Ovary (tissue), 10 donors: ENCODE measurements at regions of chr4 and their contacts with region 1.

Region 1: GRCh38 chr4:7042697-7043464 is at the start of gene TADA2B:
- DNase-seq: peak; percentile 97 to 99 (median 97)
- H3K4me3 ChIP-seq: peak within 1 kb of the TSS; percentile 83
- H3K27ac ChIP-seq: peak within 1 kb of the TSS; percentile 26 to 74
- H3K4me1 ChIP-seq: peaks cover 29% of the 10 kb centered on the region
- H3K27me3 ChIP-seq: no peaks in the 10 kb centered on the region
- CTCF ChIP-seq: peak in 2 of 3 donors; percentile 58 to 89
- EP300 ChIP-seq: no peak
- POLR2A ChIP-seq: no peak
- total RNA-seq, gene TADA2B: 11.9 to 31.6 (median 26.9) TPM

Region 2: GRCh38 chr4:6855692-6856297 is 187.1 kb before region 1 on chr4:
- intact Hi-C with region 1: no loop called
- DNase-seq: no peak
- H3K4me3 ChIP-seq: no peak overlapping the region
- H3K27ac ChIP-seq: peak overlapping the region in 1 of 2 donors; percentile 17
- H3K4me1 ChIP-seq: peaks cover 14% of the 10 kb centered on the region
- H3K27me3 ChIP-seq: no peaks in the 10 kb centered on the region
- CTCF ChIP-seq: no peak
- EP300 ChIP-seq: no peak
- POLR2A ChIP-seq: no peak

Region 3: DNA sequence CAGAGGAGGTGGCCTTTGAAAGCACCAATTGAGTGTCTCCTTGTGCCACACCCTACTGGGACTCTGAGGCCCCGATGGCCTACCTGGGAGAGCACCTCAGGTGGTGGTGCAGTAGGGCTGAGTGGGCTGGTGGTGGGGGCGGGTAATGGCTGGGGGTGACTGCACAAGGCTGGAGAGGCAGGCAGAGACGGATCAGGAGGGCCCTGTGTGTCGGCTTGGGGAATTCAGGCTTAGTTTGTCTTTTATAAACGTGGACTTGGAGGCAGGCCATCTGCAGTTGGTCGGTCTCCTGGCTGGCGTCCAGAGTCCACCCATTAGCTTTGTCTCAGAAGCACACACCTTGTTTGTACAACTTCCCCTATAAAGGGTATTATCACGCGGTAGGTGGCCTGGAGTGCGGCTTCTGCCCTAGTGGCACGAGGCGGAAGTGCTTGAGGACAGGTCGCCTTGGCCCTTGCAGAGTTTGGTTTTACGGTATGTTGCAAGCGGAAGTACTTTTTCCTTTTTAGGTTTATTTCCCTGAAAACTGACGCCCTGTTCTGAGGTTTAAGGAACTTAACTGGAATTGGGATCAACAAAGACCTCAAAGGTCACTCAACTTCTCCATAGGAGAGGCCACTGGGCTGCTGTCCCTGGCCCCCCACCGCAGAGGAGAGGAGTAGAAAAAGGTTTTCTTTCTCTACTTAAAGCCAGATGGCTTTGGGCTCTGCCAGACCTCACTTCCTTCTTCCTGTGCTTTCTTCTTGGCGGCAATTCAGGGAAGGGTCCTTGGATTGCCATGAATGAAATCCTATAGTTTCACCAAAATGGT is 125.2 kb before region 1 on chr4:
- intact Hi-C with region 1: loop called in 1 of 4 experiments (anchors 10 kb)
- DNase-seq: peak; percentile 64 to 81 (median 70)
- H3K4me3 ChIP-seq: no peak overlapping the region
- H3K27ac ChIP-seq: peak overlapping the region; percentile 21 to 55
- H3K4me1 ChIP-seq: peaks cover 18% of the 10 kb centered on the region
- H3K27me3 ChIP-seq: no peaks in the 10 kb centered on the region
- CTCF ChIP-seq: peak in 2 of 3 donors; percentile 40 to 44
- EP300 ChIP-seq: peak; percentile 20
- POLR2A ChIP-seq: no peak

Region 4: DNA sequence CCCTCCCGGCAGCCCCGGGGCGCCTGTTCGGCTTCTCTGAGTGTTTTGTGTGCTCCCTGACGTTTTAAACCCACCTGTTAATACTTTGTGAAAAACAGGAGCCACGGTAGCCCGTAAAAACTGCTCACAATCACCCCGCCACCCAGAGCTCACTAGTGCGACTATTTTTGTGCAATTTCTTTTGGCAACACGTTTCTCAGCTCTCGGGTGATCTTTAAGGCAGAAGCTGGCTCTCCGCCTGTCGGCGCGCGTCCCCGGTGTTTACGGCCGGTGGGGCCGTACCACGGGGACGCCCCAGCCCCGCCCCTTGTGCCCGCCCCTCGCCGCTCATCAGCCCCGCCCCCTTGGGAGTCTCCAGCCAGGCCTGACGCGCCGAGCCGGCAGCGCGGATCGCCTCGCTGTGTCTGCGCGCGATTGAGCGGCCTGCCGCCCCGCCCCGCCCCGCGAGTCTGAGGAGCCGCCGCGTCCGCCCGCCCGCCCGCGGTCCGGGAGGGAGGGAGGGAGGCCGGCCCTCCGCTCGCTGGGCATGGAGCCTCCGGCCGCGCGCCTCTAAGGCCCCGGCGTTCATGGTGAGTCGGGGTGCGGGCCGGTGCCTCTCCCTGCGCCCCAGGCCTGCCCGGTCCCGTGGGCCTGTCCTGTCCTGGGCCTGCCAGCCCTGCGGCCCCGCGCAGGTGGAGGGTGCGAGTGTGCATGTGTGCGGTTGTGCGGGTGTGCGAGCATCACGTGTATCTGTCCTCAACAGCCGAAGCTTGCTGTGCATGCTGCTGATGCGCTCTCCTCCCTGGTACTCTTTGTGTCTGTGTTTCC is 55.9 kb before region 1 on chr4:
- intact Hi-C with region 1: loop called in 1 of 4 experiments (anchors 10 kb)
- DNase-seq: peak; percentile 95 to 97 (median 96)
- H3K4me3 ChIP-seq: peak overlapping the region; percentile 80
- H3K27ac ChIP-seq: peak overlapping the region; percentile 77 to 92
- H3K4me1 ChIP-seq: peaks cover 7% of the 10 kb centered on the region
- H3K27me3 ChIP-seq: no peaks in the 10 kb centered on the region
- CTCF ChIP-seq: peak in 1 of 3 donors; percentile 10
- EP300 ChIP-seq: no peak
- POLR2A ChIP-seq: peak; percentile 83

Region 5: GRCh38 chr4:7067452-7068278 is 24.8 kb after region 1 on chr4 and contains the start of gene GRPEL1:
- intact Hi-C with region 1: loop called in 1 of 4 experiments (anchors 2 kb)
- DNase-seq: peak; percentile 99 to 100 (median 100)
- H3K4me3 ChIP-seq: peak within 1 kb of the TSS; percentile 78
- H3K27ac ChIP-seq: peak within 1 kb of the TSS; percentile 38 to 84
- H3K4me1 ChIP-seq: peaks cover 9% of the 10 kb centered on the region
- H3K27me3 ChIP-seq: no peaks in the 10 kb centered on the region
- CTCF ChIP-seq: peak in 1 of 3 donors; percentile 22
- EP300 ChIP-seq: peak; percentile 16
- POLR2A ChIP-seq: peak; percentile 88
- total RNA-seq, gene GRPEL1: 11.1 to 37.0 (median 23.3) TPM

Region 6: GRCh38 chr4:7186061-7186461 is 143.2 kb after region 1 on chr4:
- intact Hi-C with region 1: loop called in 1 of 4 experiments (anchors 10 kb)
- DNase-seq: peak in 2 of 5 donors; percentile 30 to 51
- H3K4me3 ChIP-seq: no peak overlapping the region
- H3K27ac ChIP-seq: no peak overlapping the region
- H3K4me1 ChIP-seq: peaks cover 2% of the 10 kb centered on the region
- H3K27me3 ChIP-seq: no peaks in the 10 kb centered on the region
- CTCF ChIP-seq: no peak
- EP300 ChIP-seq: no peak
- POLR2A ChIP-seq: no peak

Region 7: GRCh38 chr4:7295911-7296660 is 253.2 kb after region 1 on chr4:
- intact Hi-C with region 1: loop called in 1 of 4 experiments (anchors 5 kb)
- DNase-seq: peak; percentile 38 to 63 (median 62)
- H3K4me3 ChIP-seq: no peak overlapping the region
- H3K27ac ChIP-seq: no peak overlapping the region
- H3K4me1 ChIP-seq: peaks cover 4% of the 10 kb centered on the region
- H3K27me3 ChIP-seq: no peaks in the 10 kb centered on the region
- CTCF ChIP-seq: peak; percentile 14 to 64 (median 53)
- EP300 ChIP-seq: no peak
- POLR2A ChIP-seq: no peak